ENCODE measurements at regions of chr9 and their contacts with region 1.

Region 1: DNA sequence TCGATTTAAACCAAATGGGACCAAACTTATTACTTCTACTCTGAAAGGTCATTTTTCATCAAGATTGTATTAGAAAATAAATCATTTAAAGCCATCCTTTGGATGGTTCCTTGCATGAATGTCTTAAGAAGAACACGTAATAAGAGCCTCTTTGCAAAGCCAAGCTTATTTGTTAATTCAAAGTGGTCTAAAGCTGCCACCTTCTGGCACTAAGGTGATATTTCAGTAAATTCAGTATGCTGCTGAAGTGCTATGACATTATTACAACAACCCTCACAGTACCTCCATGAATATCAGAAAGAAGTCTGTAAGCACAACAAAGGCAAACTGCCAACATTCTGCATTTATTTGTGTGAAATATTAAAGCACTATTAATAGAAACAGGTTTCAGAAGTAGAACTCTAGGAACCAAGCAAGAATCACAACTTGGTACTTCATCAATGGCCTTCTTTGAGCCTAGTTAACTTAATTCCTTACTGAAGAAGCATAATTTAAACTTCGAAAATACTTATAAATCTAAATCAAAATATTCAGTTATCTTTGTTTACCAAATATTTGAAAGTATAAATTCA is 53.1 kb upstream of the TYRP1 start:
- DNase-seq: no peak
- ATAC-seq: peak; percentile 83
- H3K4me3 Mint-ChIP-seq: no peak overlapping the region
- H3K27ac Mint-ChIP-seq: no peak overlapping the region
- H3K4me1 Mint-ChIP-seq: no peaks in the 10 kb centered on the region
- H3K27me3 Mint-ChIP-seq: no peaks in the 10 kb centered on the region
- CTCF ChIP-seq: peak; percentile 45

Region 2: GRCh38 chr9:12554636-12555035 is 85.5 kb before region 1 on chr9:
- CTCF ChIA-PET with region 1: interaction called, 12 read pairs
- POLR2A ChIA-PET with region 1: no interaction called
- DNase-seq: no peak
- ATAC-seq: peak; percentile 46; the same call in 1 of the 2 replicates
- H3K4me3 Mint-ChIP-seq: no peak overlapping the region
- H3K27ac Mint-ChIP-seq: no peak overlapping the region
- H3K4me1 Mint-ChIP-seq: peaks cover under 1% of the 10 kb centered on the region; the same call in 1 of the 2 replicates
- H3K27me3 Mint-ChIP-seq: no peaks in the 10 kb centered on the region
- CTCF ChIP-seq: no peak

Region 3: GRCh38 chr9:12604164-12604821 is 35.8 kb before region 1 on chr9:
- CTCF ChIA-PET with region 1: no interaction called
- POLR2A ChIA-PET with region 1: no interaction called
- DNase-seq: no peak
- ATAC-seq: no peak
- H3K4me3 Mint-ChIP-seq: no peak overlapping the region
- H3K27ac Mint-ChIP-seq: no peak overlapping the region
- H3K4me1 Mint-ChIP-seq: no peaks in the 10 kb centered on the region
- H3K27me3 Mint-ChIP-seq: no peaks in the 10 kb centered on the region
- CTCF ChIP-seq: no peak